SK-N-SH (cell line): ENCODE measurements at regions of chr18 and their contacts with region 1.

Region 1: GRCh38 chr18:12934454-12935071 is 13.2 kb upstream of the SEH1L start:
- DNase-seq: peak; percentile 78
- H3K4me3 ChIP-seq: peak overlapping the region in 1 of 2 experiments; percentile 33; a peak in 1 of 4 replicates
- H3K27ac ChIP-seq: no peak overlapping the region
- H3K4me1 ChIP-seq: no peaks in the 10 kb centered on the region
- H3K27me3 ChIP-seq: no peaks in the 10 kb centered on the region
- CTCF ChIP-seq: peak; percentile 96
- EP300 ChIP-seq: no peak
- RAD21 ChIP-seq: peak; percentile 100

Region 2: DNA sequence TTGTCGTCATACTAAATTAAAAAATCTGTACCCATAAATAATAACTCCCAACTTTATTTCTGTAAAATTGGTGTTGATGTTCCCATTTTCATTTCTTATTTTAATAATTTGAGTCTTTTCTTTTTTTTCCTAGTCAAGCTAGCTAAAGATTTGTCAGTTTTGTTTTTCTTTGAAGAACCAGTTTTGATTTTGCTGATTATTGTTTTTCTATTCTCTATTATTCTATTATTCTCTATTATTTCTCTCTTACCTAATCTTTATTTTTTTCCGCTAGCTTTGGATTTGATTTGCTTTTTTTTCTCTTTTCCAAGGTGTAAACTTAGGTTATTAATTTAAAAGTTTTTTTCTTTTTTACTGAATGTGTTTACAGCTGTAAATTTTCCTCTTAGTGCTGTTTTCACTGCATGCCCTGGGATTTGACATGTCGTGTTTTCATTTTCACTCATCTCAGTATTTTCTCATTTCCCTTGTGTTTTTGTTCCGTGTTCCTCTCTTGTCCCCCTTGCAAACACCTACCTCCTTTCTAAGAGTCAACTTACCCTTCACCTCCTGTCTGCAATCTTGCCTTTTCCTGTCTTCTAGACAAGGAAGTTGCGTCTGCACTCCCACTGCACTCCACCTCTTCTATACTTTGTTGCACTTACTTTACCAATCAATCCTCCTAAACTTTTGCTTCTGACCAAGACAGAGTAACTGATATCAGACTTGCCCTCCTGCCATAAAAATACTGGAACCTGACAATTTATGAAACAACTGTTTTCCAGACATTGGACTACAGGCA is 212.9 kb before region 1 on chr18:
- CTCF ChIA-PET with region 1: interaction called, 175 read pairs
- POLR2A ChIA-PET with region 1: no interaction called
- DNase-seq: no peak
- H3K4me3 ChIP-seq: no peak overlapping the region
- H3K27ac ChIP-seq: no peak overlapping the region
- H3K4me1 ChIP-seq: no peaks in the 10 kb centered on the region
- H3K27me3 ChIP-seq: no peaks in the 10 kb centered on the region
- CTCF ChIP-seq: no peak
- EP300 ChIP-seq: no peak
- RAD21 ChIP-seq: no peak

Region 3: DNA sequence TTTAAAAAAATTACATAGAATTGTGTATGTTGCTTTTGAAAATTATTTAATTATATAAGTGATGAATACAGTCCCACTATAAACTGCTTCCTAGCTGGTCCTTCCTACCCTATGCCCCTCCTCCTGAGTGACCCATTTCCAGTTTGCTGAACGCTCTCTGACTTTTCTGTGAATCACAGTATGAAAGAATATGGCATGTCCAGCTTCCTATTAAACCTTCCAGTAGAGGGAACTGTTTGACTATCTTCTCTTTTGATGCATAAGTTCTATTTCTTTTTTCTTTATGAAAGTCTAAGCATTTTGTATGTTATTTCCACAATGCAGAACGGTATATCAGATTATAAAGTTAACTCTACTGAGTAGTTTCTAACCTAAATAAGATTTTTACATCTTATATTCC is 190.5 kb before region 1 on chr18:
- CTCF ChIA-PET with region 1: interaction called, 124 read pairs
- POLR2A ChIA-PET with region 1: no interaction called
- DNase-seq: peak; percentile 66
- H3K4me3 ChIP-seq: no peak overlapping the region
- H3K27ac ChIP-seq: no peak overlapping the region
- H3K4me1 ChIP-seq: no peaks in the 10 kb centered on the region; a peak in 2 of 4 replicates
- H3K27me3 ChIP-seq: no peaks in the 10 kb centered on the region
- CTCF ChIP-seq: peak; percentile 77
- EP300 ChIP-seq: no peak
- RAD21 ChIP-seq: peak; percentile 84

Region 4: DNA sequence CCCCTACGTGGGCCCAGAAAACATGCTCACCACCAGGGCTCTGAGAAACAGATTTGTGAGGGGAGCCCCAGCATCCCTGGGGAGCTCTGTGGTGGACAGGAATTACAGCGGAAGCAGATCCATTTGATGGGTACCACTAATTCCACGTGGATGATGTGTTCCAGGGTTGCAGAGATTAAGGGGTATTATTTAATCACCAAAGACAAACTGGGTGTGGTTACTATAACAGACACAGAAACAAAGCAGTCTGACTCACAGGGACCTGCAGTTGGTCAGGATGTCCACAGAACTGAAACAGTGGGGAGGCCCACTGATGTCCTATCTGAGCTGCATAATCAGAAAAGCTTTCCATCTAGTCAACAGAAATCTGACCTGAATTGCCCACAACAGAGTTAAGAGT is 165.9 kb before region 1 on chr18:
- CTCF ChIA-PET with region 1: interaction called, 10 read pairs
- POLR2A ChIA-PET with region 1: no interaction called
- DNase-seq: no peak
- H3K4me3 ChIP-seq: no peak overlapping the region
- H3K27ac ChIP-seq: no peak overlapping the region
- H3K4me1 ChIP-seq: no peaks in the 10 kb centered on the region
- H3K27me3 ChIP-seq: no peaks in the 10 kb centered on the region
- CTCF ChIP-seq: no peak
- EP300 ChIP-seq: no peak
- RAD21 ChIP-seq: no peak

Region 5: GRCh38 chr18:12890506-12890905 is 44.1 kb before region 1 on chr18:
- CTCF ChIA-PET with region 1: interaction called, 21 read pairs
- POLR2A ChIA-PET with region 1: no interaction called
- DNase-seq: no peak
- H3K4me3 ChIP-seq: no peak overlapping the region
- H3K27ac ChIP-seq: no peak overlapping the region
- H3K4me1 ChIP-seq: no peaks in the 10 kb centered on the region; a peak in 1 of 4 replicates
- H3K27me3 ChIP-seq: no peaks in the 10 kb centered on the region
- CTCF ChIP-seq: 0 out of 2 replicates have a peak, but pooled peaks have one; percentile 7
- EP300 ChIP-seq: no peak
- RAD21 ChIP-seq: no peak

Region 6: DNA sequence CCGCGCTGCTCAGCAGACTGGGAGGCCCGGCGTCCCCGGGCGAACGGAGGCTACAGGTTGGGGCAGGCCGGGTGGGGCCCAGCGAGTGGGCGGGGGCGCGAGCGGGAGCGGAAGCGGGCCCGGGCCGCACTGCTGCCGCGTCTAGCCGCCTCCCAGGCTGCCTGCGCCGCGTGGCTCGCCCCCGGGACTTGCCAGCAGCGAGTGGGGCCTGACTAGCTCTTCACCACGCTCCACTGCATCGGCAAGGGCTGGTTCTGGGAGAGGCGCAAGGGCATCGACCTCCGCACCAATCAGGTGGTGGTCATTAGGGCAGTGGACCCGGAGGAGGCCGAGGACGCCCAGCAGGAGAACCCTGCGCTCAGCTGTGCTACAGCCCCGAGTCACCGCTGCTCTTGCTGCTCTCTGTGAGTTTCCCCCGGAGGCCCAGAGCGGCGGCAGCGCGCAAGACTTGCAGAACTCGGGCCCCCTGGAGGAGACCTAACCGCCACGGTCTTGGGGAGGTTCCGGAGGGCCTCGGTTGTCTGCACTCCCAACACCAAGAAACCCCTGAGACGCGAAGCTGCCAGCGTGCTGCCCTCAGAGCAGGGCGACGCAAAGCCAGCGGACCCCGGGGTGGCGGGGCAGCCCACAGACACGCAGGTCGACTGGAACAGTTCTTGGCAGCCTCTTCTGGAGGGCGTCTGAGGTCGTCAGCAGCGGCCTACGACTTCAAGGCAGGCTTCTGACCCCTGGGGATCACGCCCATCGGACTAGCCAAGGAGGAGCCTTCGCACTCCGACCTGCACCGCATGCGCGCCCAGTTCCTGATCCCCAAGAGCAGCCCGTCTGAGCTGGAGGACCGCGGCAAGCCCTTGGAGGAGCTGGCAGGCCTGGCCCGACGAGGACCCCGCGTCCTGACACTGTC is 23.3 kb before region 1 on chr18:
- CTCF ChIA-PET with region 1: interaction called, 19 read pairs
- POLR2A ChIA-PET with region 1: no interaction called
- DNase-seq: no peak
- H3K4me3 ChIP-seq: no peak overlapping the region
- H3K27ac ChIP-seq: no peak overlapping the region
- H3K4me1 ChIP-seq: peaks cover 0 to 7% of the 10 kb centered on the region in 2 experiments; a peak in 1 of 4 replicates
- H3K27me3 ChIP-seq: no peaks in the 10 kb centered on the region
- CTCF ChIP-seq: no peak
- EP300 ChIP-seq: no peak
- RAD21 ChIP-seq: no peak

Region 7: GRCh38 chr18:12947355-12948041 is 12.9 kb after region 1 on chr18 and contains the start of gene SEH1L:
- CTCF ChIA-PET with region 1: interaction called, 41 read pairs
- POLR2A ChIA-PET with region 1: no interaction called
- DNase-seq: peak; percentile 98
- H3K4me3 ChIP-seq: peak within 1 kb of the TSS; percentile 71 to 90
- H3K27ac ChIP-seq: peak within 1 kb of the TSS; percentile 94 to 95
- H3K4me1 ChIP-seq: peaks cover 0 to 7% of the 10 kb centered on the region in 2 experiments; a peak in 3 of 4 replicates
- H3K27me3 ChIP-seq: no peaks in the 10 kb centered on the region
- CTCF ChIP-seq: no peak
- EP300 ChIP-seq: no peak
- RAD21 ChIP-seq: no peak
- polyA plus RNA-seq, gene SEH1L: 29.8 and 30.4 TPM in 2 replicates

Region 8: GRCh38 chr18:13035249-13035914 is 100.8 kb after region 1 on chr18:
- CTCF ChIA-PET with region 1: no interaction called
- POLR2A ChIA-PET with region 1: no interaction called
- DNase-seq: no peak
- H3K4me3 ChIP-seq: no peak overlapping the region
- H3K27ac ChIP-seq: peak overlapping the region in 1 of 2 experiments; percentile 30; a peak in 2 of 4 replicates
- H3K4me1 ChIP-seq: no peaks in the 10 kb centered on the region; a peak in 1 of 4 replicates
- H3K27me3 ChIP-seq: no peaks in the 10 kb centered on the region
- CTCF ChIP-seq: no peak
- EP300 ChIP-seq: no peak
- RAD21 ChIP-seq: no peak